AG04450 (cell line): ENCODE measurements at regions of chr11 and their contacts with region 1.

Region 1: DNA sequence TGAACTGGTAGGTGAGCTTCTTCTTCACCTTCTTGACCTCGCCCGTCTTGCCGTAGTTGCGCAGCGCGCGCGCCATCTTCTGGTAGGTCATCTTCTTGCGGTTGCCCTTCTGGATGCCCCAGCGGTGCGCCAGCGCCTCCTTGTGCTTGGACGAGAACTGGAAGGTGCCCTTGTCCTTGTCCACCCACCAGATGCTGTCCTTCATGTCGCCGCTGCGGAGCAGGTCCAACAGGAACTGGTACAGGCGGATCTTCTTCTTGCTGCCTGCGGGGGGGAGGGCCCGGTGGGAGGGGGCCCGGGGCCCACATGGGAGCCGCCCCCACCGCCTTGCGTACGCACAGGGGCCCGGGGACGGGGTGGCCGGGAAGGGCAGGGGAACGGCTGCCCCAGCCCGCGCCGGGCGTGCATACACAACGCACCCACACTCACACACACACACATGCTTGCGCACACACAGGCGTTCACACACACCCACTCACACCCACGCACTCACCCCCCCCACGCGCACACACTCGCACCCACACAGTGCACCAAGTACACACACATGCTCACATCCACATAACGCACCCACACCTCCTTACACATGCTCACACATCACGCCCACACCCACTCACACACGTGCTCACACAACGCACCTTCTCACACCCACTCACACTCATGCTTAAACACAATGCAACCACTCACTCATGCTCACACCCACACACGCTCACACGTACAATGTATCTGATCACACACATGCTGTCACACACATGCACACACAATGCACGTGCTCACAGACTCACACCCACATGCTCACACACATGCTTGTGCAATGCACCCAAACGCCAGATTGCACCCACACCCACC is 3.0 kb upstream of the MYBPC3 start:
- DNase-seq: peak; percentile 74
- H3K4me3 ChIP-seq: peak overlapping the region; percentile 41
- H3K27ac ChIP-seq: no peak overlapping the region
- H3K27me3 ChIP-seq: no peaks in the 10 kb centered on the region
- CTCF ChIP-seq: peak; percentile 95

Region 2: DNA sequence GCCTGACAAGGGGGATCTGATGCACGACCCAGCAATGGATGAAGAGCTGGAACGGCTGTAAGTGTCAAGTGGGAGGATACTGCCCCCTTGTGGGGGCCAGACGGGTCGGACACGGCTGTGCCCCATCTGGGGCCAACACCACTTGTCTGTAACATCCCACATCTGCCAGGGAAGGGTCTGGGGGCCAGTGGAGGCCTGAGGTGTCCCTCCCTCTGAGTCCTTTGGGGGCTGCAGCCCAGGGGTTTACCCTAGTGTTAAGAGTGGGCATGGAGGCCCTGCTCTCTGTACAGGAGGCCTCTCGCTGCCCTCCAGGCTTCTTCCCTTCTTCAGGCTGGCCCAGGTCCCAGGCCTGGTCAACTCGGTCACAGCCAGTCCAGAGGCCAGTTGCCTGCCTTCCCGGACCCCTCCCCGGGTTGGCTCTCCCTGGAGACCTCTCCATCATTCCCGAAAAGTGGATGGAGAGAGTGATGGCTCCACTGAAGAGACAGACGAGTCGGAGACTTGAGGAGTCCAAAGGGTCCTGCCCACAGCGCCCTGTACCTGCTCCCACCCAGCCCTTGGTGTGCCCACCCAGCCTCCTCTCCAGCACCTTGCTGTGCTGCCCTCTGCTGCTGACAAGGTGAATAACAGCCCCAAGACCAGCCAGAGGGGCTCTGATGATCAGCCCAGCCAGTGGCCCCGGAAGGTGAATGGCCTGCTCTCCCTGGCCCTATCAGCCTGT is 194.2 kb before region 1 on chr11:
- CTCF ChIA-PET with region 1: interaction called, 12 read pairs
- POLR2A ChIA-PET with region 1: no interaction called
- DNase-seq: no peak
- H3K4me3 ChIP-seq: no peak overlapping the region
- H3K27ac ChIP-seq: no peak overlapping the region
- H3K27me3 ChIP-seq: no peaks in the 10 kb centered on the region
- CTCF ChIP-seq: peak; percentile 89

Region 3: GRCh38 chr11:47186076-47186936 is 169.2 kb before region 1 on chr11 and contains the start of gene PACSIN3:
- CTCF ChIA-PET with region 1: interaction called, 43 read pairs
- POLR2A ChIA-PET with region 1: no interaction called
- DNase-seq: no peak
- H3K4me3 ChIP-seq: peak within 1 kb of the TSS; percentile 67
- H3K27ac ChIP-seq: peak within 1 kb of the TSS; percentile 57
- H3K27me3 ChIP-seq: no peaks in the 10 kb centered on the region
- CTCF ChIP-seq: no peak
- polyA plus RNA-seq, gene PACSIN3: 15.3 and 19.7 TPM in 2 replicates

Region 4: DNA sequence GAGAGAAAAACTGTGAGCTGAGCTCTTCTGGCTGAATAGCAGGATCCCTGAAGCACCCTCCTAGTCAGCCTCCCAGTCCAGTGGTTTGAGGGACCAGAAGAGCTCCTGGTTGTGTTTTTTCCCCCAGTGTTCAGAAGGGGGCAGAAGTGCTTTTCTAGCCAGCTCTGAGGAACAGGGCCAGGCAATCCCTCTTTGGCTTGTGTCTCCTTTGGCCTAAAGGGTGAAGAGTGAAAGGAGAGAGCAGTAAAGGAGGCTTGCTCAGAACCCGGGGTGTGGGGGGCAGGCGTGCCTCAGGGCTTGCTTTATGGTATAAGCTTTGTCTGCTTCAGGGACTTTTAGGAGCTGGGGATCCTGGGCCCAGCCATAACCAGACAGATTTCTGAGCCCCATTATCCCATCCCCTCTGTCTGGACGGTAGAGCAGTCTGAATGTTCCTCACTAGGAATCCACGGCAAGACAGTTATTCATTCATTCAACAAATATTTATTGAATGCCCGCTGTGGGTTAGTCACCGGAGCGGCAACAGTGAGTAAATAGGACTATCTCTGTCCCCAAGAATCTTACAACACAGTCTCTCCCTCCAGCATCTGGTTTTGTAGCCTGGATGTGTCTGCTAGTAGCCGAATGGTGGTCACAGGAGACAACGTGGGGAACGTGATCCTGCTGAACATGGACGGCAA is 121.4 kb before region 1 on chr11:
- CTCF ChIA-PET with region 1: interaction called, 30 read pairs
- POLR2A ChIA-PET with region 1: no interaction called
- DNase-seq: no peak
- H3K4me3 ChIP-seq: no peak overlapping the region
- H3K27ac ChIP-seq: no peak overlapping the region
- H3K27me3 ChIP-seq: no peaks in the 10 kb centered on the region
- CTCF ChIP-seq: peak; percentile 48

Region 5: GRCh38 chr11:47305734-47306483 is 49.6 kb before region 1 on chr11:
- CTCF ChIA-PET with region 1: interaction called, 11 read pairs
- POLR2A ChIA-PET with region 1: no interaction called
- DNase-seq: no peak
- H3K4me3 ChIP-seq: no peak overlapping the region
- H3K27ac ChIP-seq: no peak overlapping the region
- H3K27me3 ChIP-seq: no peaks in the 10 kb centered on the region
- CTCF ChIP-seq: no peak